Activated CD4-positive, alpha-beta T cell treated with anti-CD3 and anti-CD28 coated beads for 36 hours (primary cell): ENCODE measurements at regions of chr12 and their contacts with region 1.

Region 1: GRCh38 chr12:27243804-27244683 is at the start of gene STK38L:
- DNase-seq: peak; percentile 99
- ATAC-seq: peak; percentile 96
- H3K4me3 Mint-ChIP-seq: peak within 1 kb of the TSS; percentile 95
- H3K27ac Mint-ChIP-seq: peak within 1 kb of the TSS; percentile 98
- H3K4me1 Mint-ChIP-seq: peaks cover 48% of the 10 kb centered on the region
- H3K27me3 Mint-ChIP-seq: no peaks in the 10 kb centered on the region
- total RNA-seq, gene STK38L: 24.9 to 30.4 TPM

Region 2: DNA sequence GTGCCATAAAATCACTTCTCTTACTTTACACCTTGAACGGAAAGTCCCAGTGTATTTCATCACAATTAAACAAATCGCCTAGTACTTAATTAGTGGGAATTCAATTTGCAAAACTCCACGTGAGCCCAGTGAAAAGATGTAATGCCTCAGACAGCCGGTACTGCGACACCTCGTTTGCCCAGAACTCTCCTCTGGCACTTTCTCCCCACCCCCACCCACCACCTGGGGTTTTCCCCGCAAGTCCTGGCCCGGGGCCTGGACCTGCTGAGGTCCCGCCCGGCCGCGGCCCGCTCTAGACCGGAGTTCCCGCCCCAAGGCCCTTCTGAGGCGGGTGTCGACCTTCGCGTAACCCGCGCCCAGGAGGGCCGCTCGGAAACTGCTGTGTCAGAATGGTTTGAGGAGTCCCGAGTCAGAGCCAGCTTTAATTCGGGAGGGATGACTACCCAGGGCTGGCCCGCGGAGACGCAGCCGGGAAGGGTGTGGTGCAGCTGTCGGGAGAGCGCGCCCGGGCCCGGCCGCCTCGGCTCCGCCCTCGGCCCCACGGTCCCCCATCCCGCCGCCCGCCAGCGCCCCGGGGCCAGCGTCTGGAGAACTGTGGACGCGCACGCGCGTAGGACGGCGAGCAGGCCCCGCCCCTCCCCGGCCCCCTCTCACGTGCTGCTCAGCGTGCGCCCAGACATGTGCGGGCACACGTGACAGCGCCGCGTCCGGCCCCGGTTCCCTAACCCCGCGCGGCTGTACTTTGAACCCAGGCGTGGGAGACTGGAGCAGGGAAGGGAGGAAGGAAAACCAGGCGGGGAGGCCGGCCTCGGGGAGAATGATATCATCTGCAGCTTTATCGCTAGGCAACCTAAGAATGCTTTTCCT is 1130.0 kb before region 1 on chr12:
- CTCF ChIA-PET with region 1: no interaction called
- POLR2A ChIA-PET with region 1: no interaction called
- intact Hi-C with region 1: loop called in 1 of 2 experiments (anchors 5 kb)
- DNase-seq: peak; percentile 87
- ATAC-seq: peak; percentile 88
- H3K4me3 Mint-ChIP-seq: peak overlapping the region; percentile 69
- H3K27ac Mint-ChIP-seq: peak overlapping the region; percentile 25
- H3K4me1 Mint-ChIP-seq: peaks cover 11% of the 10 kb centered on the region
- H3K27me3 Mint-ChIP-seq: peaks cover 37% of the 10 kb centered on the region

Region 3: GRCh38 chr12:26937875-26938700 is 306.0 kb before region 1 on chr12 and contains the starts of genes FGFR1OP2 and INTS13:
- CTCF ChIA-PET with region 1: no interaction called
- POLR2A ChIA-PET with region 1: no interaction called
- intact Hi-C with region 1: loop called in 1 of 2 experiments (anchors 1 kb)
- DNase-seq: peak; percentile 99
- ATAC-seq: peak; percentile 92
- H3K4me3 Mint-ChIP-seq: peak within 1 kb of the TSS; percentile 98
- H3K27ac Mint-ChIP-seq: peak within 1 kb of the TSS; percentile 99
- H3K4me1 Mint-ChIP-seq: peaks cover 56% of the 10 kb centered on the region
- H3K27me3 Mint-ChIP-seq: no peaks in the 10 kb centered on the region
- total RNA-seq, gene FGFR1OP2: 38.5 to 43.1 TPM
- total RNA-seq, gene INTS13: 66.3 to 71.5 TPM

Region 4: GRCh38 chr12:27179400-27180214 is 64.4 kb before region 1 on chr12:
- CTCF ChIA-PET with region 1: interaction called, 3 read pairs
- POLR2A ChIA-PET with region 1: no interaction called
- intact Hi-C with region 1: loop called (anchors 1 to 2 kb)
- DNase-seq: peak; percentile 58
- ATAC-seq: peak; percentile 95
- H3K4me3 Mint-ChIP-seq: peak overlapping the region; percentile 7
- H3K27ac Mint-ChIP-seq: peak overlapping the region; percentile 90
- H3K4me1 Mint-ChIP-seq: peaks cover 41% of the 10 kb centered on the region
- H3K27me3 Mint-ChIP-seq: no peaks in the 10 kb centered on the region

Region 5: DNA sequence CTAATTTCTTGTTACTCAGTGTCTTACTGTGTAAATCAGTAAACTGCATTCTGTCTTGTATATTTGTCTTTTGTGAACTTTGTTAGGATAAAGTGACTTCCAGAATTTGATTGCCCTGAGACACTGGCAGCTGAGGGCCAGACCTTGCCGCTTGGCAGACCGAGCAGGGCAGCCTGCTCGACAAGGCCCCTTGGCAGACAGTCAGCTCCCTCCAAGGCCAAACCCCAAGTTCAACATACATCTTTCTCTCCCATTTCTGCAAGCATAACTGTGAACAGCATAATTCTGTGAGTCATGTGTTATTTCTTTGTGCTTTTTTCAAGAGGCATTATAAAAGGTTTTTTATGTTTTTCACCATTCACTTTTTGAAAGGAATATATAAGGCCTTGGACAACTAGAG is 49.4 kb after region 1 on chr12:
- CTCF ChIA-PET with region 1: no interaction called
- POLR2A ChIA-PET with region 1: no interaction called
- intact Hi-C with region 1: loop called in 1 of 2 experiments (anchors 2 kb)
- DNase-seq: no peak
- ATAC-seq: no peak
- H3K4me3 Mint-ChIP-seq: no peak overlapping the region
- H3K27ac Mint-ChIP-seq: no peak overlapping the region
- H3K4me1 Mint-ChIP-seq: peaks cover 8% of the 10 kb centered on the region
- H3K27me3 Mint-ChIP-seq: no peaks in the 10 kb centered on the region

Region 6: DNA sequence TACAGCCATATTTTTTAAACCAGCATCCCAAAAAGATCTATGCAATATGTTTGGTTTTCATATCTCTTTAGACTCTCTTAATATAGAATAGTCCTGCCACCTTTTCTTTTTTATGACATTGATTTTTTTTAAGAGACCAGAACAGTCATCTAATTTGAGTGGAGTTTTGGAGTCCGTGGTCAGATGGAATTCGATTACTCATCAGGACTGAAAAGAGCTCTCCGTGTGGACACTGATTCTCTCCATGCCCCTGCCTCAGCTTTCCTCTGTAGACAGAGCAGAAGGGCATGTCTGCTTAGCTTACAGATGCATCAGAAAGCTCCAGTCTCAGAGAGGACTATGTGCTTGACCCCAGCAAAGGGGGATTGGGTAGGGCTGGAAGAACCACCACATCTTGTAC is 230.3 kb after region 1 on chr12:
- CTCF ChIA-PET with region 1: no interaction called
- POLR2A ChIA-PET with region 1: no interaction called
- intact Hi-C with region 1: no loop called
- DNase-seq: no peak
- ATAC-seq: no peak
- H3K4me3 Mint-ChIP-seq: no peak overlapping the region
- H3K27ac Mint-ChIP-seq: no peak overlapping the region
- H3K4me1 Mint-ChIP-seq: peaks cover 17% of the 10 kb centered on the region
- H3K27me3 Mint-ChIP-seq: peaks cover 4% of the 10 kb centered on the region

Region 7: DNA sequence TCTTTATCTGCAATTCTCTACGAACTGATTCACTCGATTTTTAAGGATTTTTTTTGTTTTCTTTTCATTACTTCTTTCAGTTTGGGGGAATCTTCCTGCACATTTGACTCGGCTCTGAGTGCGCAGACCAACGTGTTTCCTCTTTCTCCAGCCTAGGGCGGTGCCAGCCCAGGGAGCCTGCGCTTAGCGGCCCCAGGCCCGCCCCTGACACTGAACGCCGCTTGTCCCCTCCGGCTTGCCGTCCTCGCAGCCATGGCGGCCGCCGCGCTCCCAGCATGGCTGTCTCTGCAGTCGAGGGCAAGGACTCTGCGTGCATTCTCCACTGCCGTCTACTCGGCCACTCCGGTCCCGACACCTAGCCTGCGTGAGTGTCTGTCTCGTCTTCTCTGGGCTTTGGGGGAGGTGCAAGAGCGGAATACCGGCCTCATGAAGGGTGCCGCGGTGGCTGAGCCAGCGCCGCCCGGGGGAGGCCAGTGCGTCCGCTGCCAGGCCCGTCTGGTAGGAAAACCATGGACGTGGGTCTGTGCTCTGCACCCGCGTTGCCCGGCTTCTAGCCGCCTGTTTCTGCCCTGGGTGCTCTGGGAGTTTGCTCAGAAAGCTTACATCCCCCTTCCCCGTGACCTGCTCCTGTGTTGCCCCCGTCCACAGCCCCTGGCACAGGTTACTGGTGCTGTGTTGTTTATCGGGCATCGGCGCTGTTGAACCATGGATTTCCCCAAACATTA is 466.7 kb after region 1 on chr12 and contains the start of gene MRPS35:
- CTCF ChIA-PET with region 1: no interaction called
- POLR2A ChIA-PET with region 1: no interaction called
- intact Hi-C with region 1: loop called in 1 of 2 experiments (anchors 10 kb)
- DNase-seq: peak; percentile 95
- ATAC-seq: peak; percentile 98
- H3K4me3 Mint-ChIP-seq: peak within 1 kb of the TSS; percentile 94
- H3K27ac Mint-ChIP-seq: peak within 1 kb of the TSS; percentile 94
- H3K4me1 Mint-ChIP-seq: peaks cover 28% of the 10 kb centered on the region
- H3K27me3 Mint-ChIP-seq: no peaks in the 10 kb centered on the region
- total RNA-seq, gene MRPS35: 58.5 to 62.1 TPM

Region 8: DNA sequence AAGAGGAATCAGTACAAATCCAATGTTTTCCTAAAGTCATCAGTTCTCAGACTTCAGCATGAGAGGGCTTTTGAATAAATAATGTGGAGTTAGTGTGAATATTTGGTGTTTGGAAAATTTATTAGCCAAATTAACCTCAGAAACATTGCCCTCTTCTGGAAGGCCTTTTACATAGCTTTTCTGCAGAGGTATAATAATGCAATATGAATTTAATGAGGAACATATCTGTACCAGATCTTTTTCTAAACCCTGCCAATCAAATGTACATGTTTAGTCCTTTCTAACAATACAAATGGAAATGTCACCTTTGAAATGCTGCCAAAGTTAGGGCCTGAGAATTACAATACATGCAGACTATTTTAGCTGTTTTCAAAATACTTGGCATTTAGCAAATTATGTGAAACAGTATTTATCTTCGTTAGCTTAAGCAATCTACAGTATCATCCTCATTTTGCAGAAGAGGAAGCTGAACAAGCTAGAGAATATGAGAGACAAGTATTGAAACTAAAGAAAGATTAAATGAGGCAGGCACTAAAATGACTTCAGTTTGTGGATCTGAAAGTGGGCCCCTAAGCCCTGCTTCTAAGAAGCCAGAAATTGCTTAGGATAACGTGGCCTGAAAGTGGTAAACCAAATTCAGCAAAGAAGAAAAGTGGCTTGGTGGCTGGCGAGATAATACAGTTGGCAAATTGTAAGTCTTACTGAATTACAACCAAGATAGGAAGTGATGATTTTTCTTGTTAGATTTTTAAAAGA is 596.4 kb after region 1 on chr12:
- CTCF ChIA-PET with region 1: no interaction called
- POLR2A ChIA-PET with region 1: no interaction called
- intact Hi-C with region 1: no loop called
- DNase-seq: no peak
- ATAC-seq: no peak
- H3K4me3 Mint-ChIP-seq: no peak overlapping the region
- H3K27ac Mint-ChIP-seq: no peak overlapping the region
- H3K4me1 Mint-ChIP-seq: no peaks in the 10 kb centered on the region
- H3K27me3 Mint-ChIP-seq: no peaks in the 10 kb centered on the region